ENCODE measurements at regions of chr1 and their contacts with region 1.

Region 1: DNA sequence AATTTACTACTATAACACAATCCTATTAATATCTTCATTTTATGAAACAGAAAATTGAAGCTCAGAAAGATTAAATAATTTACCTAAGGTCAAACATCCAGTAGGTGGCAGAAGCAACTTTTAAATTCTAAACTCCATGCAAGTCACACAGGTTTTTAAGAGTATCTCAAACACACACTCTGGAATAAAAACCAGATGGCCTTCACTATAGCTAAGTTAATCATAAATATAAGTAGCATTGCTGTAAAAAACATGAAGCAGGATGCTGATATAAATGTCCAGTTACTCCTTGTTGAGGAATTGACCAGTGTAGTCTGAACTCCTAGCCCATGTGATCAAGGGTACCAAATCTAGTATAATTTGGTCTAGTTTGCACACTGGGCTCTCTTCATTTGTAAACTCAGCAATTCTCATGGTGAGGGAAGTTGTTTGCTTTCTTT is 9.4 kb upstream of the FMO3 start:
- DNase-seq: peak; percentile 64
- ATAC-seq: peak; percentile 93
- H3K4me3 ChIP-seq: no peak overlapping the region
- H3K27ac ChIP-seq: peak overlapping the region; percentile 73; the same call in 1 of the 2 replicates
- H3K4me1 ChIP-seq: peaks cover 5% of the 10 kb centered on the region; the same call in 1 of the 2 replicates
- H3K27me3 ChIP-seq: no peaks in the 10 kb centered on the region
- CTCF ChIP-seq: peak; percentile 65
- POLR2A ChIP-seq: no peak
- RAD21 ChIP-seq: peak; percentile 62

Region 2: DNA sequence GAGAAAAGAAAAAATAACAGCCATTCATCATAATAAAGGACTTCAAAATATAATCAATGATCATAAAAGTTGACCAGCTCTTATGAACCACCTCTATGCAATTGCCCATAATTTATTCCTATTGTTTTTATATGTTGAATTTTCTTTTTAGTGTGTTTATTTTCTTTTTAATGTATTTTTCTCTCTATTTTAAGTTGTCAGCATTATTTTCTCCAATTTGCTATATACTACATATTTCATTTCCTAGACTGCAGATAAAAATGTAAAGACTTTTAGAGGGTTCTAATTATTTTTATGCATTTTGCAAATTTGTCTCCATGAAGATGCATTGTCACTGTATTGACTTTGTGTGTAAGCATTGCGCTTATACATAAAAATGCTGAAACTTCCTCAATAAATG is 87.6 kb before region 1 on chr1:
- CTCF ChIA-PET with region 1: no interaction called
- POLR2A ChIA-PET with region 1: no interaction called
- dilution Hi-C with region 1: no loop called
- in situ Hi-C with region 1: no loop called
- intact Hi-C with region 1: no loop called
- DNase-seq: no peak
- ATAC-seq: no peak
- H3K4me3 ChIP-seq: no peak overlapping the region
- H3K27ac ChIP-seq: no peak overlapping the region
- H3K4me1 ChIP-seq: no peaks in the 10 kb centered on the region
- H3K27me3 ChIP-seq: no peaks in the 10 kb centered on the region
- CTCF ChIP-seq: no peak
- POLR2A ChIP-seq: no peak
- RAD21 ChIP-seq: no peak

Region 3: GRCh38 chr1:171032822-171033702 is 48.3 kb before region 1 on chr1:
- CTCF ChIA-PET with region 1: no interaction called
- POLR2A ChIA-PET with region 1: no interaction called
- dilution Hi-C with region 1: no loop called
- in situ Hi-C with region 1: no loop called
- intact Hi-C with region 1: no loop called
- DNase-seq: no peak
- ATAC-seq: no peak
- H3K4me3 ChIP-seq: no peak overlapping the region
- H3K27ac ChIP-seq: no peak overlapping the region
- H3K4me1 ChIP-seq: no peaks in the 10 kb centered on the region
- H3K27me3 ChIP-seq: no peaks in the 10 kb centered on the region
- CTCF ChIP-seq: no peak
- POLR2A ChIP-seq: no peak
- RAD21 ChIP-seq: no peak

Region 4: GRCh38 chr1:171141688-171142415 is 60.5 kb after region 1 on chr1:
- CTCF ChIA-PET with region 1: interaction called, 5 read pairs
- POLR2A ChIA-PET with region 1: interaction called, 3 read pairs
- dilution Hi-C with region 1: no loop called
- in situ Hi-C with region 1: no loop called
- intact Hi-C with region 1: loop called (anchors 1 kb)
- DNase-seq: peak; percentile 96
- ATAC-seq: peak; percentile 93
- H3K4me3 ChIP-seq: no peak overlapping the region
- H3K27ac ChIP-seq: peak overlapping the region; percentile 86
- H3K4me1 ChIP-seq: peaks cover 13% of the 10 kb centered on the region
- H3K27me3 ChIP-seq: no peaks in the 10 kb centered on the region
- CTCF ChIP-seq: peak; percentile 44
- POLR2A ChIP-seq: no peak
- RAD21 ChIP-seq: no peak; the same call in 1 of the 2 replicates

Region 5: DNA sequence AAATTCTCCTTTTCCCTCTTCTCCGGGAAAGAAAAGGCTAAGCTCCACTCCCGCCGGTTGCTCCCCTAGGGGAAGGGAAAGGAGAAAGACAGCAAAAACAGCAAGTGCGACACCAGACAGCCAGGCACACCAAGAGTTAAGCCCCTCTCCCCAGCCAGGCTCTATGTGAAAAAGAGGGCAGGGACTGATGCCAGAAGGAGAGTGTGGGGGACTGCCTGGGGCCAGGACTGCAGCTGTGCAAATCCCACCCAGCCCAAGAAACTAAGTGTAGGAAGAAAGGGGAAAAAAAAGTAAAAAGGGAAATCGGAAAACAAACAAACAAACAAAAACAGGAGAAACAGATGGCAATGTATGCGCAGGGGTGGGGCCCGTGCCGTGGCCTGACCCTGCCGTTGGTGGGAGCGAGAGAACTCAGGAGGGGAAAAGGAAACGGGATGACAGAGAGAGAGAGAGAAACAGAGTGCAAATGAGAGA is 139.3 kb after region 1 on chr1:
- CTCF ChIA-PET with region 1: interaction called, 55 read pairs
- POLR2A ChIA-PET with region 1: no interaction called
- dilution Hi-C with region 1: no loop called
- in situ Hi-C with region 1: no loop called
- intact Hi-C with region 1: no loop called
- DNase-seq: peak; percentile 44
- ATAC-seq: peak; percentile 59
- H3K4me3 ChIP-seq: peak overlapping the region; percentile 2; the same call in 1 of the 2 replicates
- H3K27ac ChIP-seq: peak overlapping the region; percentile 97
- H3K4me1 ChIP-seq: peaks cover 18% of the 10 kb centered on the region
- H3K27me3 ChIP-seq: no peaks in the 10 kb centered on the region
- CTCF ChIP-seq: no peak
- POLR2A ChIP-seq: no peak
- RAD21 ChIP-seq: no peak

Region 6: DNA sequence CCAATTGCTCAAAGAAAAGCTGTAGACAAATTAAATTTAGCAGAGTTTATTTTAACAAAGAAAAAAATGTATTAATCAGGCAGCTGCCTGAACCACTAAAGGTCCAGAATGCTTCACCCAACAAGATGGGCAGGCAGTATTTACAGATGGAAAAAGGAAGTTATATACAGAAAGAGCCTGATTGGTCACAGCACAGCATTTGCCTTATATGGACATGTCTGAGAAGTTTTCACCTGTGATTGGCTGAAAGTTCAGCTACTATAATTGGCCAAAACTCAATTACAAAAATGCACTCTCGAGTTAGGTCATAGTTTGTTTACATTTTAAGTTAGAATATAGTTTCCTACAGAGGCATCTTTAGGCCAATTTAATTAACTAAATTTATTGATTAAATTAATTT is 151.9 kb after region 1 on chr1:
- CTCF ChIA-PET with region 1: interaction called, 55 read pairs
- POLR2A ChIA-PET with region 1: no interaction called
- dilution Hi-C with region 1: no loop called
- in situ Hi-C with region 1: loop called (anchors 5 kb)
- intact Hi-C with region 1: no loop called
- DNase-seq: no peak
- ATAC-seq: no peak
- H3K4me3 ChIP-seq: no peak overlapping the region
- H3K27ac ChIP-seq: no peak overlapping the region
- H3K4me1 ChIP-seq: no peaks in the 10 kb centered on the region
- H3K27me3 ChIP-seq: no peaks in the 10 kb centered on the region
- CTCF ChIP-seq: no peak
- POLR2A ChIP-seq: no peak
- RAD21 ChIP-seq: no peak

Region 7: DNA sequence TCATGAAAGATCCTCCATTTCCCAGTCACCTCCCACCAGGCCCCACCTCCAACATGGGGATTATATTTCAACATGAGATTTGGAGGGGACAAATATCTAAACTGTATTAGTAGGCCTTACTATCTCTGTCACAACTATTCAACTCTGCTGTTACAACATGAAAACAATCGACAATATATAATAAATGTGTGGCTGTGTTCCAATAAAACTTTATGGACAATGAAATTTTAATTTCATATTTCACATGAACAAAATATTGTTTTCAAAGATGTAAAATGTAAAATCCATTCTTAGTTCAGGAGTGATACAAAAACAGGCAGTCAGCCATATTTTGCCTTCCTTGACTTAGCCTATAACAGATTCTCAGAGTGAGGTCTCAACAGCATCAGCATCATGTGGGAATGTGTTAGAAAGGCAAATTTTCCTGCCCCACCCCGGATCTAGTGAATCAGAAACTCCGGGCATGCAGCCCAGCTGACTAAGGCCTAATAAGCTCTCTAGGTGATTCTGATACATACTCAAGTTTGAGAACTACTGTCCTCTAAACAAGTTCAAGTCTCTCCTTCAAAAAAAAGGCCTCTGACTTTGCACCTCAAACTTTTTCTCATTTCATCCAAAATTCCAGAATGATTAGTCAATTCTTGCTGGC is 357.0 kb after region 1 on chr1:
- CTCF ChIA-PET with region 1: no interaction called
- POLR2A ChIA-PET with region 1: no interaction called
- dilution Hi-C with region 1: no loop called
- in situ Hi-C with region 1: no loop called
- intact Hi-C with region 1: no loop called
- DNase-seq: peak; percentile 98
- ATAC-seq: peak; percentile 85
- H3K4me3 ChIP-seq: no peak overlapping the region
- H3K27ac ChIP-seq: no peak overlapping the region
- H3K4me1 ChIP-seq: peaks cover 3% of the 10 kb centered on the region
- H3K27me3 ChIP-seq: no peaks in the 10 kb centered on the region
- CTCF ChIP-seq: no peak
- POLR2A ChIP-seq: no peak
- RAD21 ChIP-seq: no peak

Measured in IMR-90 (cell line).